A673 (cell line): ENCODE measurements at regions of chr6 and their contacts with region 1.

Region 1: GRCh38 chr6:93419304-93420162 is at the start of gene EPHA7:
- DNase-seq: peak; percentile 98
- H3K4me3 ChIP-seq: peak within 1 kb of the TSS; percentile 84
- H3K27ac ChIP-seq: peak within 1 kb of the TSS; percentile 79
- H3K4me1 ChIP-seq: peaks cover 29% of the 10 kb centered on the region
- H3K27me3 ChIP-seq: peaks cover 4% of the 10 kb centered on the region
- CTCF ChIP-seq: no peak
- total RNA-seq, gene EPHA7: 8.4 and 10.7 TPM in 2 replicates

Region 2: GRCh38 chr6:92810913-92811312 is 608.6 kb before region 1 on chr6:
- CTCF ChIA-PET with region 1: interaction called, 4 read pairs
- POLR2A ChIA-PET with region 1: no interaction called
- intact Hi-C with region 1: loop called (anchors 2 kb)
- DNase-seq: peak; percentile 60
- H3K4me3 ChIP-seq: no peak overlapping the region
- H3K27ac ChIP-seq: no peak overlapping the region
- H3K4me1 ChIP-seq: no peaks in the 10 kb centered on the region
- H3K27me3 ChIP-seq: no peaks in the 10 kb centered on the region
- CTCF ChIP-seq: peak; percentile 72

Region 3: GRCh38 chr6:93040375-93040774 is 379.2 kb before region 1 on chr6:
- CTCF ChIA-PET with region 1: interaction called, 5 read pairs
- POLR2A ChIA-PET with region 1: no interaction called
- intact Hi-C with region 1: loop called (anchors 2 kb)
- DNase-seq: peak; percentile 92
- H3K4me3 ChIP-seq: no peak overlapping the region
- H3K27ac ChIP-seq: no peak overlapping the region
- H3K4me1 ChIP-seq: peaks cover 5% of the 10 kb centered on the region
- H3K27me3 ChIP-seq: no peaks in the 10 kb centered on the region
- CTCF ChIP-seq: no peak

Region 4: DNA sequence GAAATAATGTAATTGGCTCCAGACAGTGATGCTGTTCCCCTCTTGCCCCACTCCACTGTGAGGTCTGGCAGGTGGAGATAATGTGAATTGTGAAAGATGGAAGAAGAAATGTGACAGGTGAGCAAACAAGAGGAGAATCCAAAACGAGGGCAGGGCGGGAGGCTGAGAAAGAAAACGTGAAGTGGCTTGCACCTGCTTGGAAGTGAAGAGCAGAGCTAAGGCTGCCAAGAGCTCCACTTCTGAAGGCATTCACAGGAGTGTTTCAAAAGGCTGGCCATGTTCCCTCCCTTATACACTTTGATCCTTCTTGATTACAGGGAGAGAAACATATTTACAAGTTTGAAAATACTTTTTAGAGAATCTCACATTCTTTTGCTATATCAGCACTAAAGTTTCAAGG is 359.6 kb before region 1 on chr6:
- CTCF ChIA-PET with region 1: no interaction called
- POLR2A ChIA-PET with region 1: no interaction called
- intact Hi-C with region 1: no loop called
- DNase-seq: no peak
- H3K4me3 ChIP-seq: no peak overlapping the region
- H3K27ac ChIP-seq: no peak overlapping the region
- H3K4me1 ChIP-seq: peaks cover 9% of the 10 kb centered on the region
- H3K27me3 ChIP-seq: no peaks in the 10 kb centered on the region
- CTCF ChIP-seq: no peak

Region 5: GRCh38 chr6:93088621-93089501 is 330.7 kb before region 1 on chr6:
- CTCF ChIA-PET with region 1: no interaction called
- POLR2A ChIA-PET with region 1: no interaction called
- intact Hi-C with region 1: loop called (anchors 2 kb)
- DNase-seq: peak; percentile 98
- H3K4me3 ChIP-seq: peak overlapping the region; percentile 24
- H3K27ac ChIP-seq: peak overlapping the region; percentile 95
- H3K4me1 ChIP-seq: peaks cover 39% of the 10 kb centered on the region
- H3K27me3 ChIP-seq: no peaks in the 10 kb centered on the region
- CTCF ChIP-seq: no peak

Region 6: DNA sequence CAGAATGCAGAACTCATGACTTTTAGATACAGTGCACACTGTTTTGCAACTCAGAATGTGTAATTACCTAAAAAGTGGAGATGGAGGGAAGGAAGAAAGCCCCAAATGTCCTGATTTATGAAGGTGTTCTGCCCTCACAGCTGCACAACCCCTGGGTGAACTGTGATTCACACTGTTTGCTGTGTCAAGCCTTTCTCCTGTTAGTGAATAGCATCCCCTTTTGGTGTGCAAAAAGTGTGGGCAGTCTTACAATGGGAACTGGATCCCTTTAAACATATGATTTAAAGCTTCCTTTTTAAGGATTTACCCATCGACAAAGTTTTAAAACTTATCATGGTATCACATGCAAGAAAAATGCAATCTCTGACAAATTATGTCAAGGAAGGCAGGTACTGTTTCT is 633.2 kb after region 1 on chr6:
- CTCF ChIA-PET with region 1: no interaction called
- POLR2A ChIA-PET with region 1: no interaction called
- intact Hi-C with region 1: loop called (anchors 10 kb)
- DNase-seq: peak; percentile 12
- H3K4me3 ChIP-seq: no peak overlapping the region
- H3K27ac ChIP-seq: no peak overlapping the region
- H3K4me1 ChIP-seq: peaks cover 10% of the 10 kb centered on the region
- H3K27me3 ChIP-seq: no peaks in the 10 kb centered on the region
- CTCF ChIP-seq: peak; percentile 26; the same call in 1 of the 2 replicates

Region 7: DNA sequence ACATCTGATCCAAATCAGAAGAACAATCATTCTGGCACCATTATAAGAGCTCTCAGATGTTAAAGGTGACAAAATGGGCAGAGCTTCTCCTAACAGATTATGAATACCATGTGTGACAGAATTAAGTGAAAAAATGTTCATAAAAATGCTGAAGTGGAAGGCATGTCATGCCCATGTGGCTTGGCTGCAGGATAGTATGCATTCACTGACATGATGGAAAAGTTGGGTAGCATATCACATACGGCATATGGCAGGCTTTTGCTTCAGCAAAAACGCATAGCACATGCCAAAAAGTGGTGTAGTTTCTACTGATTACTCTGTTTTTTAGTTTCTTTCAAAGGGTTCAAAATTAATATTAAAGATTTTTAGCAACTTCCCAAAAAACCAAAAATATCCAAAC is 731.4 kb after region 1 on chr6:
- CTCF ChIA-PET with region 1: no interaction called
- POLR2A ChIA-PET with region 1: no interaction called
- intact Hi-C with region 1: no loop called
- DNase-seq: no peak
- H3K4me3 ChIP-seq: no peak overlapping the region
- H3K27ac ChIP-seq: no peak overlapping the region
- H3K4me1 ChIP-seq: no peaks in the 10 kb centered on the region
- H3K27me3 ChIP-seq: no peaks in the 10 kb centered on the region
- CTCF ChIP-seq: no peak

Region 8: DNA sequence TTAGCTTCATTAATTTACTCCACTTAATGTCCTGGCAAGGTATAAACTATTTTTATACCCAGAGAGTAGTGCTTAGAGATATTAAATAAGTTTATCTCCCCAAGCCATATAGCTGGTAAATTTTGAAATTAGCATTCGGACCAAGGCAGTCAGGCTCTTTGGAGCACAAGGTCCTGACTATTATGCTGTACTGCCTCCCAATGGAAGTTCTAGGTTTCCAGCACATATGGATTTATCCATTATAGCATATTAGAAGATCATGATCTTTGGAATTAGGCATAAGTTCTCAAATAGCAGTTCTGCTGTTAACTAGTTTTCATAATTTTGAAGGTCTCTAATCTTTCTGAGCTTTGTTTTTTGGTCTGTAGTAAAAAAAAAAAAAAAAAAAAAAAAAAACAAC is 835.2 kb after region 1 on chr6:
- CTCF ChIA-PET with region 1: interaction called, 5 read pairs
- POLR2A ChIA-PET with region 1: no interaction called
- intact Hi-C with region 1: loop called (anchors 5 kb)
- DNase-seq: peak; percentile 33
- H3K4me3 ChIP-seq: no peak overlapping the region
- H3K27ac ChIP-seq: no peak overlapping the region
- H3K4me1 ChIP-seq: no peaks in the 10 kb centered on the region
- H3K27me3 ChIP-seq: no peaks in the 10 kb centered on the region
- CTCF ChIP-seq: peak; percentile 49